Dorsolateral prefrontal cortex (tissue), 120 donors: ENCODE measurements at regions of chr10 and their contacts with region 1.

Region 1: GRCh38 chr10:125982260-125982948 is 86.0 kb downstream of the FANK1 start:
- DNase-seq: peak in 4 of 10 donors; percentile 20 to 54 (median 37)
- H3K4me3 ChIP-seq: peak overlapping the region in 1 of 59 donors; percentile 8
- H3K27ac ChIP-seq: no peak overlapping the region
- H3K27me3 ChIP-seq: no peaks in the 10 kb centered on the region
- CTCF ChIP-seq: peak; percentile 70 to 97 (median 84)

Region 2: DNA sequence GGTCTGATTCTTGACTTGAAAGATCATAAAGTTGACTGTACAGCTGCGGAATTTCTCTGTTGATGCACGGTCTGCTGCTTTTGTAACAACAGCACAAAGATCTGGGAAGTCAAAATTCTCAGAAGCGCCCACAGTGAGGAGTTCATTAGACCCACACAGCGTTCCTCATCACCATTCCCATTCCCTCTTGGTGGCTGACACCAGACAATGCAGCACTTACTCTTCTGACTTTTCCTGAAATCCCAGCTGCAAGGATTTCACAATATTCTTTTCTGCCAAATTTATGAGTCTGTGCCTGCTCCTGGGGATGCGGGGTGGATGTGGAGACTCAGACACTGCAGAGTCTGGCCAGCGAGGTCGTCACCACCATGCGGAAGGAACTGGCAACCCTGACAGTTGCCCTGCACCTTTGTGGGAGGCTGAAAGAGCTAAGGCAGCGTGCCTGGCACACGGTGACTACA is 147.9 kb after region 1 on chr10:
- intact Hi-C with region 1: no loop called
- DNase-seq: no peak
- H3K4me3 ChIP-seq: no peak overlapping the region
- H3K27ac ChIP-seq: no peak overlapping the region
- H3K27me3 ChIP-seq: no peaks in the 10 kb centered on the region
- CTCF ChIP-seq: no peak

Region 3: GRCh38 chr10:126302826-126303665 is 320.6 kb after region 1 on chr10:
- intact Hi-C with region 1: loop called (anchors 2 to 5 kb)
- DNase-seq: no peak
- H3K4me3 ChIP-seq: no peak overlapping the region
- H3K27ac ChIP-seq: no peak overlapping the region
- H3K27me3 ChIP-seq: no peaks in the 10 kb centered on the region
- CTCF ChIP-seq: peak in 53 of 56 donors; percentile 8 to 82 (median 51)

Region 4: DNA sequence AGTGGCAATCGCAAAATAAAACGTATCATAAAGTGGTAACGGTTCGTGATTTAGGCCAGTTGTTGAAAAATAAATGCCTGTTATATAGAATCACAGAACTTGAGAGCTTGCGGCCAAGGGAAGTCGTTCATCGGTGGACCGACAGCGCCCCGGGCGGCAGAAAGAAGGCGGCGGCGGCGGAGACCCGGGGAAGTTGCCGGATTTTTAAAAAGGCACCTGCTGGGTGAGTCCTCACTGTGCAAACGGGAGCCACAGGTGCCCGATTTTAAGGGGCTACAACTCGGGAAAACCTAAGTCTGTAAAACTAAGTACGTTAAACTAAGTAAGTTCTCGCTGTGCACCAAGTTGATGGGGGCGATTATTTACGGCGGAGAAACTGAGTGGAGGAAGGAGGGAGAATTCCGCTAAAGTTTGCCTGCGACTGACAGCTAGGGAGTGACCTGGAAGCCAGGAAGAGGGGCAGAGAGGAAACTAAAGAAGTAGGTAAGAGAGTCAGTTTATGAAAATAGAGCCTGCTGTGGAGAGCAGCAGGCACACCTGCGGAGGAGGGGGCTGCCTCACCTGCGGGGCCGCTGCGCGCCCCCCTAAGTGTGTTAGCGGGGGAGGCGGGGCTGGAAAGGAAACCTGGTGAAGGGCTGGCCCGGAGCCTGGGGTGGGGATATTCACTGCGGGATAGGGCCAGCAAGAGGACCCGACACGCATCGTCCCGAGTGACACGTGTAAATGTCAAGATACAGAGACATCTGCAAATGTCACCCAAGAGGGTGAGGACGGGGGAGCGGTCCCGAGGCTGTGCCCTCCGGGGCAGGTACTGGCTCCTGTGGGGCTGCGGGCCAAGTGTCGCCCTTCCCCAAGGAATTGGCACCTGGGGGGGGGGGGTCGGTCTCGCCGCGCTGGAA is 404.9 kb after region 1 on chr10:
- intact Hi-C with region 1: loop called (anchors 2 to 5 kb)
- DNase-seq: peak; percentile 19 to 82 (median 70)
- H3K4me3 ChIP-seq: peak overlapping the region; percentile 43 to 77 (median 62)
- H3K27ac ChIP-seq: peak overlapping the region in 8 of 59 donors; percentile 11 to 62 (median 38)
- H3K27me3 ChIP-seq: peaks cover 0 to 5% (median 0%) of the 10 kb centered on the region in 45 donors
- CTCF ChIP-seq: peak; percentile 56 to 90 (median 81)

Region 5: GRCh38 chr10:126504063-126504739 is 521.8 kb after region 1 on chr10:
- intact Hi-C with region 1: loop called (anchors 5 to 10 kb)
- DNase-seq: peak in 2 of 10 donors; percentile 44 to 48
- H3K4me3 ChIP-seq: no peak overlapping the region
- H3K27ac ChIP-seq: peak overlapping the region in 29 of 59 donors; percentile 1 to 73 (median 53)
- H3K27me3 ChIP-seq: no peaks in the 10 kb centered on the region
- CTCF ChIP-seq: peak; percentile 27 to 80 (median 66)